Activated CD4-positive, alpha-beta T cell treated with anti-CD3 and anti-CD28 coated beads, Interleukin-2, amount 10 ng/mL, durations not matched to agents 24 days and 14 days (primary cell): ENCODE measurements at regions of chr5 and their contacts with region 1.

Region 1: GRCh38 chr5:109409844-109410388 is at the start of gene PJA2:
- DNase-seq: peak; percentile 99
- H3K4me3 Mint-ChIP-seq: peak within 1 kb of the TSS; percentile 99
- H3K27ac Mint-ChIP-seq: peak within 1 kb of the TSS; percentile 100
- H3K4me1 Mint-ChIP-seq: peaks cover 42% of the 10 kb centered on the region
- H3K27me3 Mint-ChIP-seq: no peaks in the 10 kb centered on the region
- total RNA-seq, gene PJA2: 39.4 and 40.6 TPM in 2 replicates

Region 2: GRCh38 chr5:108381954-108382783 is 1027.7 kb before region 1 on chr5 and contains the start of gene FBXL17:
- intact Hi-C with region 1: loop called (anchors 1 kb)
- DNase-seq: peak; percentile 97
- H3K4me3 Mint-ChIP-seq: peak within 1 kb of the TSS; percentile 84
- H3K27ac Mint-ChIP-seq: peak within 1 kb of the TSS; percentile 91
- H3K4me1 Mint-ChIP-seq: peaks cover 22% of the 10 kb centered on the region
- H3K27me3 Mint-ChIP-seq: no peaks in the 10 kb centered on the region
- total RNA-seq, gene FBXL17: 7.5 and 8.6 TPM in 2 replicates

Region 3: DNA sequence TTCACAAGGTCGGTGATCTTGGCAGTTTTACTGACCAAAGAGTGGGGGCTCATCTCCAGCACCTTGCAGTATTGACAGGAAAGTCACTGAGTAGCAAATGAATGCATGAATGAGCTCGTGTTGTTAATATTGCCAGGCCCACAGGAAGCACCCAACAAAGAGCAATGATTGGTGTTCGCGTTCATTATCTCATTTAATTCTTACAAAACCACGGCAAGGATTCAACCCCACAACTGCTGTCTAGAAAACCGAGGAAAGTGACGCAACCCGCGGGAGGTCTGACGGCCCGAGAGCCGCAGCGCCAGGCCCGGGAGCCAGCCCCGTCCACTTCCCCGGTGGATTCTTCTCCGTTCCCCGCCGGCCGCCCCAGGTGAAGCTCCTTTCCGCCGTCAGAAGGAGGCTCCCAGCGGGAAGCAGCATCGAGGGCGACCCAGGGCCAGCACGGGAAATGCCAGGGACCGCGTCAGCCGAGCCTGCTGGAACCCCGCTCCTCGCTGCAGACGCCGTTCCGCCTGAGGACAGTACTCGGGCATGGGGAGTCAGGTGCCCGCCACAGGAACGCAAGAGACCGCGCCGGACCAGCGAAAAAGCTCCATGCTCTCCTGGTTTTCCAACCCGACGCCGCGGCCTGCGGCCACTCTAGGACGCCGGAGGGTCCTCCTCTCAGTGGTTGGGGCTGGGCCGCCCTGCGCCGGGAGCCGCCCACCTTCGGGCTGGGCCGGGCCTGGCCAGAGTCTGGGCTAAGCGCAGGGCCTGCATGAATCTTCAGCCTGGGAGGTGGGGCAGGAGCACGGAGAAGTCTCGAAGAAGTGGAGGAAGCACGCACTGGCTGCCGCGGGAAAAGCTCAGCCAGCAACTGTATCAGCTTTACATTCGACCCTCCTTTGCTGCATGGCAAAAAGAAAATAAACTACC is 682.0 kb before region 1 on chr5:
- intact Hi-C with region 1: loop called (anchors 5 kb)
- DNase-seq: peak; percentile 73
- H3K4me3 Mint-ChIP-seq: peak overlapping the region; percentile 79
- H3K27ac Mint-ChIP-seq: peak overlapping the region; percentile 43
- H3K4me1 Mint-ChIP-seq: peaks cover 19% of the 10 kb centered on the region
- H3K27me3 Mint-ChIP-seq: peaks cover 73% of the 10 kb centered on the region

Region 4: DNA sequence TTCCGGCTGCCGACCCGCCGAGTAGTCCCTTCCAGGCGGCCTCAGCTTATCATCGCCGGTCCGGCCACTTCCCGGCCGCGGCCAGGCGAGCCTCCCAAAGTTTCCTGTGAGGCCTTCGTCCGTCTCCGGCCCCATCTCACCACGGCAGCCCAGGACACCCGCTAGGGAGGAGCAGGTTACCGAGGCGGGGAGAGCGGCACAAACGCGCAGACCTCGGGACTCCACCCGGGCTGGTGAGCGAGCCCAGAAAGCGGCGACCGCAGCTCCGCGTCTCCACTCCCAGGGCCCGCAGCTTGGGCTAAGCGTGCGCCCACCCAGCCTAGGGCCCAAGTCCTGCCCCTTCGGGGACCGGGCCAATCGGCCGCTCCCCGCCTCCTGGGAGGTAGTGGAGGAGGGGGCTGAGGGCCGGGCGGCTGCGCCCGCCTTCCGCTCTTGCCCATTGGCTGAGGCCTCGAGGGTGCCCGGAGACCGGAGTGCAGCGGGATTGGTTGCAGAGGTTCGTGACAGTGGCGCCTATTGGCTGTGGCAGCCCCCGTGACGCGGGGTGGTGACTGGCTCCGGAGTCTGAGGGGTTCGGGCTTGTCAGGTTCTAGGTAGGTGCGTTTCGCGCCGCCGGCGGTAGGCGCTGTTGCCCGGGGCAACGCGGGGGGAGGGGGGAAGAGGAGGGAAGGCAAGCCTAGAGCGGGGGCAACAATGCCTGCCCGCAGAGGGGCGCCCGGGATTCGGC is 661.4 kb before region 1 on chr5:
- intact Hi-C with region 1: loop called (anchors 1 kb)
- DNase-seq: peak; percentile 99
- H3K4me3 Mint-ChIP-seq: peak overlapping the region; percentile 87
- H3K27ac Mint-ChIP-seq: peak overlapping the region; percentile 84
- H3K4me1 Mint-ChIP-seq: peaks cover 8% of the 10 kb centered on the region
- H3K27me3 Mint-ChIP-seq: peaks cover 37% of the 10 kb centered on the region

Region 5: DNA sequence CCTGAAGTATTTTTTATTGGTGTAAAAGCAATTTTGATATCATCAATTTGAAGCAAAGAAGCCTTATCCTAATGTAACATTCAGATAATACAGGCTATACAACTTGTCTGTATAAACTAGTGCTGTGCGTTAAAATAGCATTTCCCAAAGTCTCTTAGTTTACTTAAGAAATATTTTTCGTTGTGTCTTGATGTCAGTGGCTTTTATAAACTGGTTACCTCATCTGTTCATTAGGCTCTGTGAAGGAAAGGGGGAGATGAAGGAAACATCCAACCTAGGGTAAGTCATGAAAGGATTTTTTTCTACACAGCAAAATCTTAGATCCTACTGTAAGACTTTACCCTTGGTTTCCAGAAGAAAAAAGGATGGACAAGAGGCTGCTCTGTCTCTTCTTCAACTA is 273.0 kb before region 1 on chr5:
- intact Hi-C with region 1: no loop called
- DNase-seq: no peak
- H3K4me3 Mint-ChIP-seq: no peak overlapping the region
- H3K27ac Mint-ChIP-seq: no peak overlapping the region
- H3K4me1 Mint-ChIP-seq: no peaks in the 10 kb centered on the region
- H3K27me3 Mint-ChIP-seq: no peaks in the 10 kb centered on the region

Region 6: DNA sequence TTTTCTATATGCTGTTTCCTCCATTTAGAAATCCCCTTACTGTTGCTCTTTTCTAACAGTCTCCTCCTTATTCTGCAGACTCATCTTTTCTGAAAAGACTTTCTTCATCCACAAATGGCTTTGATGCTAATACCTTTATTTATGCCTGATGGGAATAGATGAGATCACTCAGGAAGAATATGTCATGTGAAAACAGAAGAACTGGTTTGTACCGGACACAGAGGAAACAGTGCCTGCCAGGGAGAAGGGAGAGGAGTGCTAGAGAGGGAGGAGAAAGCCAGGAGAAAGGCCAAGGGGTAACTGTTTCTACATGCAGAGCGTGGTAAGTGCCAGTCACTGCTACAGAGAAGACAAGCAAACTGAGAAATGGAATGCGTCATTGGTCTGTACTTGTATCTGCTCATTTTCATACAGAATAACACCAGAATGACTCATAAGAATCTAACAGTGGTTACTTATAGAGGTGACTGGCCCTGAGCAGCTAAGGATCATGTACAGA is 45.7 kb after region 1 on chr5:
- intact Hi-C with region 1: loop called (anchors 5 kb)
- DNase-seq: no peak
- H3K4me3 Mint-ChIP-seq: no peak overlapping the region
- H3K27ac Mint-ChIP-seq: peak overlapping the region; percentile 34
- H3K4me1 Mint-ChIP-seq: peaks cover 4% of the 10 kb centered on the region
- H3K27me3 Mint-ChIP-seq: peaks cover 2% of the 10 kb centered on the region

Region 7: DNA sequence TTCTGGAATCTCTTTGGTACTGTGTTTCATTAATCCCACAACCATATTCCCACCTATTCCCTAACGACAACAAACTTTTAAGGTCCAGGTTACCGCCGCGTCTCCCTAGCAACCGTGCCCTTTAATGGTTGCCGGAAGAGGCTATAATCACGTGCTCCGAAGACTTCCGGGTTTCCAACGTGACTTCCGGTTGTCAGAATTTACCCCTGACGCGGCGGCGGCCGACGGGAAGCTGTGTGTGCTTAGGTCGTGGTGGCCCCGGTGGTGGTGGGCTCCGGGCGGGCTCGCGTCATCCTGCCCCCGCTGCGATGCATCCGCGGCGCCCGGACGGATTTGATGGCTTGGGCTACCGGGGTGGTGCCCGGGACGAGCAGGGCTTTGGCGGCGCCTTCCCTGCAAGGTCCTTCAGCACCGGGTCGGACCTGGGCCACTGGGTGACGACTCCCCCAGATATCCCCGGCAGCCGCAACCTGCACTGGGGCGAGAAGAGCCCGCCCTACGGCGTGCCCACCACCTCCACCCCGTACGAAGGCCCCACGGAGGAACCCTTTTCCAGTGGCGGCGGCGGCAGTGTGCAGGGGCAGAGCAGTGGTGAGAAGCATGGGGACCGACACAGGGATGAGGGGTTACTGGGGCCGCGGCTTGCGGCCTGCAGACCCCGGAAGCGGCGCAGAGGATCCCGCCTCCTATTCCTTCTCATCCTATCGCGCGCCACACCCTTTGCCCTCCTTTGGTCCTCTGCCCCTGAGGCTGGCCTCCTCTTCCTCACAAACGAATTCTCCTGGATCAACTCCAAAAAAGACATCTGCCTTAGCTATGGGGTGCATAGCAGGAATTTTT is 1329.1 kb after region 1 on chr5 and contains the start of gene SLC25A46:
- intact Hi-C with region 1: loop called (anchors 2 kb)
- DNase-seq: peak; percentile 97
- H3K4me3 Mint-ChIP-seq: peak within 1 kb of the TSS; percentile 97
- H3K27ac Mint-ChIP-seq: peak within 1 kb of the TSS; percentile 96
- H3K4me1 Mint-ChIP-seq: peaks cover 24% of the 10 kb centered on the region
- H3K27me3 Mint-ChIP-seq: peaks cover 14% of the 10 kb centered on the region
- total RNA-seq, gene SLC25A46: 47.0 and 49.4 TPM in 2 replicates

Region 8: GRCh38 chr5:110751902-110752762 is 1342.2 kb after region 1 on chr5:
- intact Hi-C with region 1: loop called (anchors 5 kb)
- DNase-seq: peak; percentile 85
- H3K4me3 Mint-ChIP-seq: peak overlapping the region; percentile 62
- H3K27ac Mint-ChIP-seq: peak overlapping the region; percentile 93
- H3K4me1 Mint-ChIP-seq: peaks cover 42% of the 10 kb centered on the region
- H3K27me3 Mint-ChIP-seq: no peaks in the 10 kb centered on the region